Esophagus muscularis mucosa (tissue), 4 donors: ENCODE measurements at regions of chr1 and their contacts with region 1.

Region 1: GRCh38 chr1:180912801-180913565 is at the start of gene KIAA1614:
- DNase-seq: no peak
- H3K4me3 ChIP-seq: peak within 1 kb of the TSS; percentile 69 to 89 (median 76)
- H3K27ac ChIP-seq: peak within 1 kb of the TSS; percentile 88 to 96 (median 94)
- H3K4me1 ChIP-seq: peaks cover 11 to 52% (median 44%) of the 10 kb centered on the region in 4 donors
- H3K27me3 ChIP-seq: no peaks in the 10 kb centered on the region
- CTCF ChIP-seq: no peak
- EP300 ChIP-seq: no peak
- POLR2A ChIP-seq: no peak
- total RNA-seq, gene KIAA1614: 15.4 to 30.0 (median 17.4) TPM

Region 2: DNA sequence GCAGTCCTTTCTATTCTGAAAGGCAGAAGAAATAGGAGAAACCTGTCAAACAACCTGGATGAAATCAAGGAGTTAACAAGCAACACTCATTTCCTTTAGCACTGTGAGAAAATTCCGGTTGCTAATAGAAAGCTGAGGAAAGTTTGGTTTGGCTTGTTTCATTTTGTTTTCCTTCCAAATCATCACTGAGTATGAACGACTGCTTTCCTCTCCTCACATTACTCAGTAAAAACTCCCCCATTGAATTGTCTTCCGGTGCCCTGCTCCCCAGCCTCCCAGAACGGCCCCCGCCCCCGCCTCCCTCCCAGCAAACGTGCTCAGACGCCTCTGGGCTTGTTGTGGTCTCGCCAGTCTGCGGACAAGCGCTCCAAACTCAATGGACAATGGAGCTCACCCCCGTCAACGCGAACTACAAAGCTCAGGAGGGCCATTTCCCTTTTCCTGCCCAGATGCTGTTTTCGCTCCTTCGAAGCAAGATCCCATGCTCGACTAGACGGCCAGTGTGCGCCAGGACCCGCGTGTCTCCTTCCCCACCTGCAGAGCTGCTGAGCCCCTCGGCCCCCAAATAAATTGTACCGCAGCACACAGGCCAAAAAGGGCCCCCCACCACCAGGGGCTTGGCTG is 108.9 kb after region 1 on chr1:
- intact Hi-C with region 1: loop called (anchors 5 kb)
- DNase-seq: no peak
- H3K4me3 ChIP-seq: peak overlapping the region; percentile 74 to 99 (median 84)
- H3K27ac ChIP-seq: peak overlapping the region; percentile 88 to 94 (median 90)
- H3K4me1 ChIP-seq: peaks cover 8 to 36% (median 32%) of the 10 kb centered on the region in 4 donors
- H3K27me3 ChIP-seq: peaks cover 0 to 4% (median 0%) of the 10 kb centered on the region in 4 donors
- CTCF ChIP-seq: no peak
- EP300 ChIP-seq: no peak
- POLR2A ChIP-seq: no peak